Activated T-helper 2 cell treated with anti-CD3 and anti-CD28 coated beads, Interferon-gamma antibody, Interleukin-2, Interleukin-4, amounts not matched to agents 10 μg/mL and 5 μg/mL and 100 μg/mL, durations not matched to agents 14 hours and 24 hours and 36 hours (primary cell): ENCODE measurements at regions of chr3 and their contacts with region 1.

Region 1: GRCh38 chr3:121654493-121655385 is 6.0 kb downstream of the HCLS1 start:
- DNase-seq: no peak
- H3K4me3 Mint-ChIP-seq: peak overlapping the region; percentile 39
- H3K27ac Mint-ChIP-seq: peak overlapping the region; percentile 83
- H3K4me1 Mint-ChIP-seq: peaks cover 68% of the 10 kb centered on the region
- H3K27me3 Mint-ChIP-seq: no peaks in the 10 kb centered on the region

Region 2: GRCh38 chr3:121252676-121253075 is 402.1 kb before region 1 on chr3:
- intact Hi-C with region 1: no loop called
- DNase-seq: no peak
- H3K4me3 Mint-ChIP-seq: no peak overlapping the region
- H3K27ac Mint-ChIP-seq: no peak overlapping the region
- H3K4me1 Mint-ChIP-seq: no peaks in the 10 kb centered on the region
- H3K27me3 Mint-ChIP-seq: no peaks in the 10 kb centered on the region

Region 3: GRCh38 chr3:121690777-121691405 is 36.2 kb after region 1 on chr3:
- intact Hi-C with region 1: loop called (anchors 5 kb)
- DNase-seq: no peak
- H3K4me3 Mint-ChIP-seq: no peak overlapping the region
- H3K27ac Mint-ChIP-seq: peak overlapping the region; percentile 42
- H3K4me1 Mint-ChIP-seq: peaks cover 18% of the 10 kb centered on the region
- H3K27me3 Mint-ChIP-seq: no peaks in the 10 kb centered on the region

Region 4: DNA sequence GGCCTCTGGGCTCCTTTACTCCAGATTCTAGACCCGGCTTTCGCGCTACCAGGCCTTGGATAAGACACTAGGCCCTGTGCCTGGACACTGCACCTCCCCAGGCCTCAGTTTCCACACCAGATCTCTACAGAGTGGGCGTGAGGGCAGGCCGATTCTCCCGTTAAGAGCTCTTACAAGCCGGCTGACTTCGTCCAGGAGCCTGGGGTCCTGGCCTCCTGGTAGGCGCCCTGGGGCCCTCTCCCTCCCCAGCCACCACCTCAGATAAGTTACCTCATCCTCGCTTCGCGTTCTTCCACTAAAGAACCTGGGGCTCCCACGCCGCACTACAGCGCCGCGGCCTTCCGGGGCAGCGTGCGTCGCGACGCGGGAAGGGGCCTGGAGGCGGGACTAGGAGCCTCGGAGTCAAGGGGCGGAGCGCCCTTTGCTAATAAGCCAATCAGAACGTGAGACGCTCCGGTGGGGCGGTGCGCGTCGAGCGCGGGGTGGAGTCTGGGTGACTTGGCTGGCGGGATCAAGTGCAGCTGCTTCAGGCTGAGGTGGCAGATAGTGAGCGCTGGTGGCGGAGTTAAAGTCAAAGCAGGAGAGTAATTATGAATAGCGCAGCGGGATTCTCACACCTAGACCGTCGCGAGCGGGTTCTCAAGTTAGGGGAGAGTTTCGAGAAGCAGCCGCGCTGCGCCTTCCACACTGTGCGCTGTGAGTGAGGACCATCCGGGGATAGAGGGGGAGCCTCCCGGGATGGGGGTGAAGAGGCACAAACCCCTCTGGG is 180.1 kb after region 1 on chr3 and contains the starts of genes EAF2 and IQCB1:
- intact Hi-C with region 1: loop called (anchors 5 kb)
- DNase-seq: peak; percentile 96
- H3K4me3 Mint-ChIP-seq: peak within 1 kb of the TSS; percentile 98
- H3K27ac Mint-ChIP-seq: peak within 1 kb of the TSS; percentile 97
- H3K4me1 Mint-ChIP-seq: peaks cover 61% of the 10 kb centered on the region
- H3K27me3 Mint-ChIP-seq: no peaks in the 10 kb centered on the region
- total RNA-seq, gene EAF2: 18.5 and 19.2 TPM in 2 replicates
- total RNA-seq, gene IQCB1: 43.4 and 44.0 TPM in 2 replicates

Region 5: DNA sequence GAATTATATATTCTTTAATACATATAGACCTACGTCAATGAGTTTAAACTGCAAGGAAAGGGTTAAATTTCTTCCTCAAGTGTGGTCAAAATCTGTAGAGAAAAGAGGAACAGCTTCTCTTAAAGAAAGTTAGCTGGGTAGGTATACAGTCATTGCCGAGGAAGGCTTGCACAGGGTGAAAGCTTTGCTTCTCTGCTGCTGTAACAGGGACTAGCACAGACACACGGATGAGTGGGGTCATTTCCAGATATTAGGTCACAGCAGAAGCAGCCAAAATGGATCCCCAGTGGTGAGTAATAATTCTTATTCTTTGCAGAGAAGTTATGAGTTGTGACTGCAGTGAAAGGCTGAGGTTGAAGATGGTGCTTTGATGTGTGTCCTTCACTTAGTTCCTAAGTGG is 400.5 kb after region 1 on chr3 and contains the start of gene CD86:
- intact Hi-C with region 1: no loop called
- DNase-seq: no peak
- H3K4me3 Mint-ChIP-seq: no peak within 1 kb of the TSS
- H3K27ac Mint-ChIP-seq: no peak within 1 kb of the TSS
- H3K4me1 Mint-ChIP-seq: peaks cover 8% of the 10 kb centered on the region
- H3K27me3 Mint-ChIP-seq: peaks cover 10% of the 10 kb centered on the region
- total RNA-seq, gene CD86: 4.8 and 6.8 TPM in 2 replicates

Region 6: GRCh38 chr3:122092460-122093165 is 437.9 kb after region 1 on chr3:
- intact Hi-C with region 1: loop called (anchors 10 kb)
- DNase-seq: peak; percentile 62
- H3K4me3 Mint-ChIP-seq: peak overlapping the region; percentile 3
- H3K27ac Mint-ChIP-seq: peak overlapping the region; percentile 85
- H3K4me1 Mint-ChIP-seq: peaks cover 57% of the 10 kb centered on the region
- H3K27me3 Mint-ChIP-seq: no peaks in the 10 kb centered on the region